Heart left ventricle (tissue), 16 donors: ENCODE measurements at regions of chr7 and their contacts with region 1.

Region 1: DNA sequence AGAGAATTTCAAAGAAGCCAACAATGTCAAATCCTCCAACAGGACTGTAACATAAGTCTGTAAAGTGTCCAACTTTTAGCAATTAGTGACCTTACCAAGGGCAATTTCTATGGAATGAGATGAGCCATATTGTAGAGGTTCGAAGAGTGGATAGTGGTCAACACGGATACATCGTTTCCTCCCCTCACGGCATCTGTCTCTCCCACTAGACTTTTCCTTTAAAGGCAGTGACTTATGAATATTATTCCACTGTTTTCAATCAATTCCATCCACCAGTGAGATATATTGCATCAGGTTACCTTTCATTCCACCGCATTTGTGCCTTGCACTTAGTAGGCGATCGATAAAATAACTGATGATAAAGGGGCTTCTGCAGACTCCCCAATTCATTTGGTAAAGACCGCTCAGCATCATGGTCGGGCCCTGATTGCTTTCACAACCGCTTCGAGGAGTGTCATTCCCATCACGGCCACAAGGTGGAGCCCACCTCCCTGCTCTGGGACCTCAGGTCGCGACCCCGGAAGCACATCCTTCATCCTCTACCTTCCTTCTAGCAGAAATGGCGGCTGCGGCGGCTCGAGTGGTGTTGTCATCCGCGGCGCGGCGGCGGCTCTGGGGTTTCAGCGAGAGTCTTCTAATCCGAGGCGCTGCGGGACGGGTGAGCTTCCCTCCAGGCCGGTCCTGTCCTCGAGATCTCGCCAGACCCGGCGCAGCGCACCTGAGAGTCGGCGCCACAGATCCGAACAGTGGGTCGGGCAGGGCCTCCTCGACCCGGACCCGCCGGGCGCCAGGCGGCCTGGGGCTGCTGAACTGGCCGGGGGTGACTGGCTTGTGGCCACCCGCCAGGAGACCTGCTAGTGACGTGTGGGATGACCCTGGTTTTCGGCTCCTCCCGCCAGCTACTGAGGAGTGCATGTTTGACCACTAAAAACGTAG is at the start of gene PMPCB:
- DNase-seq: peak; percentile 94 to 97 (median 96)
- ATAC-seq: peak; percentile 94 to 98 (median 98)
- H3K4me3 ChIP-seq: peak within 1 kb of the TSS; percentile 78 to 97 (median 90)
- H3K27ac ChIP-seq: peak within 1 kb of the TSS in 11 of 12 donors; percentile 77 to 91 (median 81)
- H3K4me1 ChIP-seq: peaks cover 4 to 25% (median 17%) of the 10 kb centered on the region in 12 donors
- H3K27me3 ChIP-seq: no peaks in the 10 kb centered on the region
- CTCF ChIP-seq: peak; percentile 94 to 98 (median 98)
- POLR2A ChIP-seq: peak in 1 of 2 donors; percentile 38
- total RNA-seq, gene PMPCB: 57.8 to 95.7 (median 73.3) TPM

Region 2: GRCh38 chr7:102991540-102992214 is 305.5 kb before region 1 on chr7:
- intact Hi-C with region 1: no loop called
- DNase-seq: no peak
- ATAC-seq: peak in 2 of 4 donors; percentile 44 to 48
- H3K4me3 ChIP-seq: no peak overlapping the region
- H3K27ac ChIP-seq: peak overlapping the region in 7 of 12 donors; percentile 44 to 77 (median 55)
- H3K4me1 ChIP-seq: peaks cover 0 to 49% (median 2%) of the 10 kb centered on the region in 12 donors
- H3K27me3 ChIP-seq: no peaks in the 10 kb centered on the region
- CTCF ChIP-seq: no peak
- POLR2A ChIP-seq: no peak

Region 3: GRCh38 chr7:103148994-103149807 is 148.0 kb before region 1 on chr7 and contains the start of gene NAPEPLD:
- intact Hi-C with region 1: loop called in 2 of 10 experiments (anchors 10 kb)
- DNase-seq: peak; percentile 89 to 94 (median 93)
- ATAC-seq: peak; percentile 93 to 97 (median 95)
- H3K4me3 ChIP-seq: peak within 1 kb of the TSS; percentile 36 to 91 (median 79)
- H3K27ac ChIP-seq: peak within 1 kb of the TSS; percentile 90 to 100 (median 97)
- H3K4me1 ChIP-seq: peaks cover 0 to 24% (median 18%) of the 10 kb centered on the region in 12 donors
- H3K27me3 ChIP-seq: no peaks in the 10 kb centered on the region
- CTCF ChIP-seq: no peak
- POLR2A ChIP-seq: peak in 1 of 2 donors; percentile 56
- total RNA-seq, gene NAPEPLD: 5.5 to 12.8 (median 8.4) TPM

Region 4: DNA sequence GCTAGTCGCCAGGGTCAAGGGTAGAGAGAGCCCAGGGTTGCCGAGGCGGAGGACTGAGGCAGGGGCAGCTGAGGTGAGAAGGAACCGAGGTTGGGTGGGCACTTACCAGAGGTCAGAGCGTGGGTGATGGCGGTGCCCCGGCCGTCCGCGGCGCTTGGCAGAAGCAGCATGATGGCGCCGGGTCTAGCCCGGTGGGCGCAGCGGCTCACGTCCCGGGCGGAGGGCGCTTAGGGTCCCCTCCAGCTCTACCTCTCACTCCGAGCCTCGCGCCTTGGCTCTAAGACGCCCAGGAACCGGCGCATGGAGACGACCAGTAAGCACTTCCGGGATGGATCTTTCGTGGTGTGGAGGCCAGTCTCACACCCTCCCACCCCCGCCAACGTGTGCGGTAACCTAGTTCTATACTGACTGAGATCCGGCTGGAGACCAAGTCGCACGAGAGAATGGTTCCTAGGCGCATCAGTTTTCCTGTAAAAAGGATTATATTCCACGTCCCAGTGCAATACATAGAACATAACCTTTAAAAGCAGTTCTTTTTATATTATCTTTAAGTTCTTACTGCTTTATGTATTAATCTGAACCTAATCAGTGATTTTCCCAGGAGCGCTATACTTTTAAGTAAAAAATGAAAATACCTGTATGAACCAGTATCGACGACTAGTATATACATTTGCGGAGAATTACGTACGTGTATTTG is 47.4 kb after region 1 on chr7 and contains the start of gene DNAJC2:
- intact Hi-C with region 1: loop called in 7 of 10 experiments (anchors 2 to 5 kb)
- DNase-seq: peak; percentile 86 to 90 (median 89)
- ATAC-seq: peak; percentile 83 to 96 (median 94)
- H3K4me3 ChIP-seq: peak within 1 kb of the TSS; percentile 75 to 99 (median 90)
- H3K27ac ChIP-seq: peak within 1 kb of the TSS; percentile 56 to 91 (median 82)
- H3K4me1 ChIP-seq: peaks cover 6 to 57% (median 37%) of the 10 kb centered on the region in 12 donors
- H3K27me3 ChIP-seq: no peaks in the 10 kb centered on the region
- CTCF ChIP-seq: no peak
- POLR2A ChIP-seq: peak in 1 of 2 donors; percentile 31
- total RNA-seq, gene DNAJC2: 6.9 to 18.3 (median 13.2) TPM

Region 5: GRCh38 chr7:103392018-103392417 is 94.8 kb after region 1 on chr7:
- intact Hi-C with region 1: no loop called
- DNase-seq: no peak
- ATAC-seq: no peak
- H3K4me3 ChIP-seq: no peak overlapping the region
- H3K27ac ChIP-seq: no peak overlapping the region
- H3K4me1 ChIP-seq: no peaks in the 10 kb centered on the region
- H3K27me3 ChIP-seq: no peaks in the 10 kb centered on the region
- CTCF ChIP-seq: no peak
- POLR2A ChIP-seq: no peak

Region 6: DNA sequence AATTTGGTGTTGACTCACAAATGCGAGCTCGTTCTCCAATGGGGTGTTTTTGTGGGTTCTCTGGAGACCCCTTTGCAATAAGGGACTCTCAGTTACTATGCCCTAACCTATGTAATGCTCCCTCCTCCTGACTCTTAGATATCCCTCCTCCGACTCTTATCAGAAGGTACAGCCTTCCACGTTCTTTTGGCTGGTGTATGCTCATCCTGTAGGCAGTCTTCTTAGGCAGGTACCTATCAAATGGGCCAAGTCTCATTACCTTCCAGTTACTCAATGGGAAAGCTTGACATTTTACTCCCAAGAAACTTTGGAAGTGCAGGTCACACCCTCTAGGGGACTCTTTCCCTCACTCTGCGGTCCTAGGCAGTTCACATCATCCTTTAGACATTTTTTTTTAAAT is 116.2 kb after region 1 on chr7:
- intact Hi-C with region 1: loop called in 3 of 10 experiments (anchors 5 kb)
- DNase-seq: no peak
- ATAC-seq: no peak
- H3K4me3 ChIP-seq: no peak overlapping the region
- H3K27ac ChIP-seq: no peak overlapping the region
- H3K4me1 ChIP-seq: no peaks in the 10 kb centered on the region
- H3K27me3 ChIP-seq: peaks cover 0 to 9% (median 0%) of the 10 kb centered on the region in 9 donors
- CTCF ChIP-seq: no peak
- POLR2A ChIP-seq: no peak

Region 7: GRCh38 chr7:103432712-103433111 is 135.5 kb after region 1 on chr7:
- intact Hi-C with region 1: no loop called
- DNase-seq: no peak
- ATAC-seq: no peak
- H3K4me3 ChIP-seq: no peak overlapping the region
- H3K27ac ChIP-seq: no peak overlapping the region
- H3K4me1 ChIP-seq: no peaks in the 10 kb centered on the region
- H3K27me3 ChIP-seq: peaks cover 0 to 20% (median 0%) of the 10 kb centered on the region in 9 donors
- CTCF ChIP-seq: no peak
- POLR2A ChIP-seq: no peak

Region 8: DNA sequence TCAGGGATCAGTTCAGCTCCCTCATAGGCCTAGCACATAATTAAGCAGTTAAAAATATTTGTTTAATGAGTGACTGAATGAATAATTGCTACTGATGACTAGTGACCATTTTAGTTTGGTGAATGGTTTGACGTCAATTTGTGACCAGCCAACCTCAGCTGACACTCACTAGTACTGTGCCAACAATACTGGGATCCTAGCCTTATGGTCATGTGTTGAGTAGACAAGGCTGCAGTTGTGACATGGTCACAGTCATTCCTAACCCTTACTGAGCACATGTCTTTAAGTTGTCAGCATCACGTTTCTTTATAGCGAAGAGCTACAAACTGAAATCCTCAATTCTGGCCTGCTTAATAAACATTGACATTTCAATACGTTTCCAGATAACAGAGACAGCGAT is 235.8 kb after region 1 on chr7:
- intact Hi-C with region 1: loop called in 1 of 10 experiments (anchors 10 kb)
- DNase-seq: no peak
- ATAC-seq: peak; percentile 88 to 92 (median 90)
- H3K4me3 ChIP-seq: no peak overlapping the region
- H3K27ac ChIP-seq: no peak overlapping the region
- H3K4me1 ChIP-seq: no peaks in the 10 kb centered on the region
- H3K27me3 ChIP-seq: no peaks in the 10 kb centered on the region
- CTCF ChIP-seq: no peak
- POLR2A ChIP-seq: no peak